CD14-positive monocyte (primary cell): ENCODE measurements at regions of chr11 and their contacts with region 1.

Region 1: GRCh38 chr11:11028017-11028692 is 170.3 kb upstream of the ZBED5 start:
- DNase-seq: peak; percentile 33 to 55 (median 35)
- H3K4me3 ChIP-seq: no peak overlapping the region
- H3K4me3 Mint-ChIP-seq: no peak overlapping the region
- H3K27ac ChIP-seq: no peak overlapping the region
- H3K27ac Mint-ChIP-seq: peak overlapping the region in 1 of 7 donors; percentile 2
- H3K4me1 ChIP-seq: no peaks in the 10 kb centered on the region
- H3K4me1 Mint-ChIP-seq: no peaks in the 10 kb centered on the region
- H3K27me3 ChIP-seq: peaks cover 0 to 7% of the 10 kb centered on the region in 2 donors
- H3K27me3 Mint-ChIP-seq: peaks cover 5 to 16% (median 10%) of the 10 kb centered on the region in 3 donors
- CTCF ChIP-seq: peak; percentile 84

Region 2: GRCh38 chr11:10878408-10879214 is 149.5 kb before region 1 on chr11:
- intact Hi-C with region 1: loop called in 1 of 2 experiments (anchors 10 kb)
- DNase-seq: peak; percentile 75 to 82 (median 78)
- H3K4me3 ChIP-seq: no peak overlapping the region
- H3K4me3 Mint-ChIP-seq: no peak overlapping the region
- H3K27ac ChIP-seq: peak overlapping the region in 1 of 2 donors; percentile 61
- H3K27ac Mint-ChIP-seq: peak overlapping the region; percentile 75 to 90 (median 77)
- H3K4me1 ChIP-seq: peaks cover 3 to 7% of the 10 kb centered on the region in 2 donors
- H3K4me1 Mint-ChIP-seq: peaks cover 9% of the 10 kb centered on the region
- H3K27me3 ChIP-seq: no peaks in the 10 kb centered on the region
- H3K27me3 Mint-ChIP-seq: no peaks in the 10 kb centered on the region
- CTCF ChIP-seq: peak; percentile 86

Region 3: GRCh38 chr11:11215944-11216343 is 187.8 kb after region 1 on chr11:
- intact Hi-C with region 1: no loop called
- DNase-seq: no peak
- H3K4me3 ChIP-seq: no peak overlapping the region
- H3K4me3 Mint-ChIP-seq: no peak overlapping the region
- H3K27ac ChIP-seq: no peak overlapping the region
- H3K27ac Mint-ChIP-seq: no peak overlapping the region
- H3K4me1 ChIP-seq: no peaks in the 10 kb centered on the region
- H3K4me1 Mint-ChIP-seq: no peaks in the 10 kb centered on the region
- H3K27me3 ChIP-seq: no peaks in the 10 kb centered on the region
- H3K27me3 Mint-ChIP-seq: peaks cover 2 to 7% (median 5%) of the 10 kb centered on the region in 3 donors
- CTCF ChIP-seq: no peak

Region 4: DNA sequence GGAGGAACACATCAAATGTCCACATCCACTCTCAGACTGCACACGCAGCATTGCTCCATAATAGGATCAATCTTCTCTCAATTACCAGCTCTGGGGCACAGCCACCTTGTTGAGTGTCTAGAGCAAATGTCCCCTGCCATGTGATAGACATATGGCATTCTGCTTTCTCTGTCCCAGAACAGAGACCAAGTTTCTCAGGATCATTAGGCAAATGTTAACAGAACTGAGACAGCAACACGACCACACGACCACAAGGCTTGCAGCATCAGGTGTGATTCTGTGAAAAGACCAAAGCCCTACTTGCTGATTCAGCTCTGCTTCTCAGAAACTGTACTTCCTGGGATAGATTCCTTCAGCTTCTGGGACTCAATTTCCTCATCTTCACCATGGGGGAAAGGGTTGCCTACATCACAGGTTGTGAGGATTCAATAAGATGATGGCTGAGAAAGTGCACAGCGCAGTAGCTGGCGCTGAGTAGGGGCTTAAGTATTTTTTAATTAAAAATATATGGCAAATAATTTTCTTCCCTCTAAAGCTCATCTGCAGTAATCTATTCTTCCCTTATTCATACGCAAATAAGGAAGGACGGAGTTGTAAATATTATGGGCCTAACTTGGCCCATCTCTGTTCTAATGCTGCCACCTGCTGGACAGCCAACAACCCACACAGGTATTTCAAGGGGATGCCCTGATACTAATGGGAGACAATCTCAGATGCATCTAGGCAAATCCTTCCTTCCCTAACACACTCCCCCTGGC is 759.3 kb after region 1 on chr11:
- intact Hi-C with region 1: loop called (anchors 5 kb)
- DNase-seq: peak; percentile 55 to 66 (median 64)
- H3K4me3 ChIP-seq: no peak overlapping the region
- H3K4me3 Mint-ChIP-seq: no peak overlapping the region
- H3K27ac ChIP-seq: no peak overlapping the region
- H3K27ac Mint-ChIP-seq: peak overlapping the region in 1 of 7 donors; percentile 53
- H3K4me1 ChIP-seq: no peaks in the 10 kb centered on the region
- H3K4me1 Mint-ChIP-seq: peaks cover 6% of the 10 kb centered on the region
- H3K27me3 ChIP-seq: peaks cover under 1 to 2% of the 10 kb centered on the region in 2 donors
- H3K27me3 Mint-ChIP-seq: peaks cover 2 to 12% (median 10%) of the 10 kb centered on the region in 3 donors
- CTCF ChIP-seq: peak; percentile 83